ENCODE measurements at regions of chr17 and their contacts with region 1.

Region 1: GRCh38 chr17:74987418-74987908 is at the start of gene CDR2L:
- DNase-seq: peak; percentile 96 to 97
- H3K4me3 ChIP-seq: peak within 1 kb of the TSS; percentile 56 to 91 (median 77)
- H3K27ac ChIP-seq: peak within 1 kb of the TSS; percentile 92 to 95
- H3K4me1 ChIP-seq: peaks cover 0 to 5% of the 10 kb centered on the region in 2 donors
- H3K27me3 ChIP-seq: no peaks in the 10 kb centered on the region
- CTCF ChIP-seq: no peak
- POLR2A ChIP-seq: peak; percentile 31
- total RNA-seq, gene CDR2L: 8.0 to 13.1 (median 9.2) TPM

Region 2: DNA sequence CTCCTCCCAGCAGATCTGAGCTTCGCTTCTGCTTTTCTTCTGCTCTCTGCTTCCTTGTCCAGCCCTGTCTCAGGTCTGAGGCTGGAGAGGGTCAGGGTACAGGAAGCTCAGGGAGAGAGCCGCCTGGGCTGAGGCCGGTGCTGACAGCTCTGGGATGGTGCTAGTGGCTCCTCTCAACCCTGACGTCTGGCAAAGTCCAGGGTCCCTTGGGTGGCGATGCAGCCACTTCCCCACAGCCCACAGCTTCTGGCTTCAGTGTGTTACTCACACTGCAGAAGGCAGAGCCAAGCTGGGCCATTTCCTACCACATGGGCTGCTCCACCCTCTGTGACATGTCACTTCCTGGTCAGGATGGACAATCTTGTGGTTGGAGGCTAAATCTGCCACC is 441.6 kb before region 1 on chr17 and contains the start of gene CD300C:
- intact Hi-C with region 1: no loop called
- DNase-seq: no peak
- H3K4me3 ChIP-seq: peak within 1 kb of the TSS in 1 of 3 donors; percentile 21
- H3K27ac ChIP-seq: no peak within 1 kb of the TSS
- H3K4me1 ChIP-seq: no peaks in the 10 kb centered on the region
- H3K27me3 ChIP-seq: no peaks in the 10 kb centered on the region
- CTCF ChIP-seq: no peak
- POLR2A ChIP-seq: no peak
- total RNA-seq, gene CD300C: 0.33 to 2.1 (median 0.59) TPM

Region 3: GRCh38 chr17:75034236-75034908 is 46.9 kb after region 1 on chr17:
- intact Hi-C with region 1: loop called (anchors 10 kb)
- DNase-seq: peak; percentile 89 to 90
- H3K4me3 ChIP-seq: peak overlapping the region; percentile 59 to 87 (median 79)
- H3K27ac ChIP-seq: peak overlapping the region; percentile 94 to 96
- H3K4me1 ChIP-seq: peaks cover 3 to 9% of the 10 kb centered on the region in 2 donors
- H3K27me3 ChIP-seq: no peaks in the 10 kb centered on the region
- CTCF ChIP-seq: peak in 1 of 3 donors; percentile 32
- POLR2A ChIP-seq: no peak

Measured in breast epithelium (tissue), 4 donors.